ENCODE measurements at regions of chr3 and their contacts with region 1.

Region 1: DNA sequence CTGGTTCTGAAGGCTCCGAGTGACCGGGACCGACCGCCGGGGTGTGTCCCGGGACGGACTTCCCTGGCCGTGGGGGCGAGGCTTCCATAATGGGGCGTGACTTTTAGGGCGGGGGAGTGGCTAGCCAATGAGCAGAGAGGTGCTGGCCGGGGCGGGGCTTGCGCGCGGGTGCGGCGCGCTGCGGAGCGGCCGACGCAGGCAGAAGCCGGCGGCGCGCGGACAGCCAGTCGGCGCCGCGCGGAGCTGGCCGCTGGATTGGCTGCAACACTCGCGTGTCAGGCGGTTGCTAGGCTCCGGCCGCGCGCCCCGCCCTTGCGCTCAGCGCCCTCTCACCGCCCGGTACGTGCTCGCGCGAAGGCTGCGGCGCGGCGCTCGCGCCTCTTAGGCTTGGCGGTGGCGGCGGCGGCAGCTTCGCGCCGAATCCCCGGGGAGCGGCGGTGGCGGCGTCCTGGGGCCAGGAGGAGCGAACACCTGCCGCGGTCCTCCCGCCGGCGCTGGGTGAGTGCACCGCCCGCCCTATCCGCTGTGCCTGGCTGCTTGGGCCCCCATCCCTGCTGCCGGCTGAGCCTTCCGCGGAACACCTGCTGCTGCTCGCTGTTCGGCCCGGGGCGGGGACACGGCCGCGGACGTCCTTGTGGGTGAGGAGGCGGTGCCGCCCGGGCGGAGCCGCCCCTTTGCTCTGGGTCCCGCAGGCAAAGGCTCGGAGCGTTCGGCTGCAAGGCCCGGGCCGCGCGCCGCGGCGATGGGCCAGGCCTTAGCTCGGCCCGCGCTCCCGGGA is at the start of gene DAG1:
- DNase-seq: peak; percentile 98 to 99
- ATAC-seq: peak; percentile 81 to 87 (median 83)
- H3K4me3 ChIP-seq: peak within 1 kb of the TSS; percentile 83
- H3K27ac ChIP-seq: peak within 1 kb of the TSS; percentile 98
- H3K4me1 ChIP-seq: peaks cover 24% of the 10 kb centered on the region
- H3K27me3 ChIP-seq: no peaks in the 10 kb centered on the region
- CTCF ChIP-seq: no peak
- total RNA-seq, gene DAG1: 67.6 to 159 (median 139) TPM

Region 2: GRCh38 chr3:49500732-49501609 is 30.8 kb after region 1 on chr3:
- intact Hi-C with region 1: loop called in 1 of 2 experiments (anchors 2 kb)
- DNase-seq: peak; percentile 72 to 82
- ATAC-seq: peak; percentile 92 to 94 (median 93)
- H3K4me3 ChIP-seq: peak overlapping the region; percentile 24
- H3K27ac ChIP-seq: peak overlapping the region; percentile 98
- H3K4me1 ChIP-seq: peaks cover 59% of the 10 kb centered on the region
- H3K27me3 ChIP-seq: no peaks in the 10 kb centered on the region
- CTCF ChIP-seq: no peak

Region 3: DNA sequence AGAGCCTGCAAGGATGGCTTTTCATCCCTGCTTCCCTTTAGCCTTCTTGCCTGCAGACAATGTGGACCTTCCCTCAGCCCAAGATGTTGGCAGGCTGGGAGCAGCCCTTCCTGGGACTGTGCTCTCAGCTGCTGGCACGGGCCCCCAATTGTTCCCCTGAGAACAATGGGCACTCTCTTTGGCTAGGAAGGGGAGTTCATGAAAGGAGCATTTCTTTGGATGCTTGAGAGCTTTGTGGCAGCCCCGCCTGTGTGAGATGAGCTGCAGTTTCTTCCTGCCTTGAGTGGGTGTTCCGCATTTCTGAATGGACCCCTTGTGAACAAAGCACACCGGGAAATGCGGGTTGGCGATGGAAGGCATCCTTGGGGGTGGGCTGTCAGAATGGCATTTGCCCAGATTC is 49.2 kb after region 1 on chr3:
- intact Hi-C with region 1: loop called in 1 of 2 experiments (anchors 5 kb)
- DNase-seq: no peak
- ATAC-seq: no peak
- H3K4me3 ChIP-seq: no peak overlapping the region
- H3K27ac ChIP-seq: peak overlapping the region; percentile 71
- H3K4me1 ChIP-seq: peaks cover 47% of the 10 kb centered on the region
- H3K27me3 ChIP-seq: no peaks in the 10 kb centered on the region
- CTCF ChIP-seq: no peak

Measured in psoas muscle (tissue), 8 donors.